Transverse colon (tissue), 4 donors: ENCODE measurements at regions of chr1 and their contacts with region 1.

Region 1: GRCh38 chr1:6701437-6702153 is at the start of gene DNAJC11:
- DNase-seq: peak; percentile 91
- H3K4me3 ChIP-seq: peak within 1 kb of the TSS; percentile 81 to 99 (median 96)
- H3K27ac ChIP-seq: peak within 1 kb of the TSS; percentile 85 to 96 (median 92)
- H3K4me1 ChIP-seq: peaks cover 3 to 47% (median 25%) of the 10 kb centered on the region in 4 donors
- H3K27me3 ChIP-seq: no peaks in the 10 kb centered on the region
- CTCF ChIP-seq: peak; percentile 45 to 90 (median 76)
- EP300 ChIP-seq: no peak
- POLR2A ChIP-seq: peak; percentile 30
- total RNA-seq, gene DNAJC11: 62.1 to 80.0 (median 70.9) TPM

Region 2: GRCh38 chr1:6784560-6785317 is 83.1 kb after region 1 on chr1:
- in situ Hi-C with region 1: no loop called
- intact Hi-C with region 1: no loop called
- DNase-seq: peak; percentile 100
- H3K4me3 ChIP-seq: peak overlapping the region; percentile 75 to 99 (median 84)
- H3K27ac ChIP-seq: peak overlapping the region; percentile 97 to 100 (median 98)
- H3K4me1 ChIP-seq: peaks cover 4 to 30% (median 21%) of the 10 kb centered on the region in 4 donors
- H3K27me3 ChIP-seq: no peaks in the 10 kb centered on the region
- CTCF ChIP-seq: no peak
- EP300 ChIP-seq: no peak
- POLR2A ChIP-seq: peak; percentile 96

Region 3: GRCh38 chr1:7084232-7084894 is 382.8 kb after region 1 on chr1:
- in situ Hi-C with region 1: no loop called
- intact Hi-C with region 1: no loop called
- DNase-seq: no peak
- H3K4me3 ChIP-seq: no peak overlapping the region
- H3K27ac ChIP-seq: no peak overlapping the region
- H3K4me1 ChIP-seq: no peaks in the 10 kb centered on the region
- H3K27me3 ChIP-seq: no peaks in the 10 kb centered on the region
- CTCF ChIP-seq: no peak
- EP300 ChIP-seq: no peak
- POLR2A ChIP-seq: no peak

Region 4: DNA sequence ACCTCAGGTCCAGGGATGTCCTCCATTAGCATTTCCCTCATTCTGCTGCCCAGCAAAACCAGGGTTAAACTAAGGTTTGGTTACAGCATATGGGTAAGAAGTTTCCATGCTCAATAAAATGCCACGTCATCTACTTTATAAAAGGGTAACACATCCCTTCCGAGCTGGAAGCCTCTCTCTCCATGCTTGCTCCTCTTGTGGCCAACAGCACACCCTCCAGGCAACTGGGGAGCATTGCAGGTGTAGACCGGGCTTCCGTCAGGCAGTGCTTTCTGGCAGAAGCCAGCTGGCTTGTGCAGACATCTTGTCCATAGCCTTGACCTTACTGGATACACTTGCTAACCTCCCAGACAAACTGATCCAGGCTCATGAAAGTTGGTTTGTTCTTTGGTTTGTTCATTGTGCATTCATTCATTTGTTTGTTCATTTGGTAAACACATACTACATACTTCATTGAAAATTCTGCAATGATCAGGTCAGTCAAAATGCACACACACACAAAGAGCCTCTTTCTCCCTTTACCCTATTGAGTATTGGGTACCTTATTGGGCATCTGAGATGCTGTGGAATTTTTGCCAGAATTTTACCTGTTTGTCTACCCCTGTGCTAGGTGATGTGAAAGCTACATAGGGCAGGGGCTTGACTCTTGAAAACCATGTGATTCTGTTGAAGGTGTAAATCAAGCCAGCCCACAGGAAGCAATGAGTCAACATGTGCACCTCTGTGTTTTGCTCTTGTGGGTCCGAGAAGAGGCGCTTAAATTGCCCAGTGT is 506.5 kb after region 1 on chr1:
- in situ Hi-C with region 1: loop called in 3 of 4 experiments (anchors 25 kb)
- intact Hi-C with region 1: no loop called
- DNase-seq: peak; percentile 35
- H3K4me3 ChIP-seq: no peak overlapping the region
- H3K27ac ChIP-seq: no peak overlapping the region
- H3K4me1 ChIP-seq: no peaks in the 10 kb centered on the region
- H3K27me3 ChIP-seq: peaks cover 4% of the 10 kb centered on the region
- CTCF ChIP-seq: peak; percentile 16 to 52 (median 45)
- EP300 ChIP-seq: no peak
- POLR2A ChIP-seq: no peak